ENCODE measurements at regions of chr17 and their contacts with region 1.

Region 1: GRCh38 chr17:55356434-55357328 is 65.0 kb downstream of the MMD start:
- DNase-seq: no peak

Region 2: DNA sequence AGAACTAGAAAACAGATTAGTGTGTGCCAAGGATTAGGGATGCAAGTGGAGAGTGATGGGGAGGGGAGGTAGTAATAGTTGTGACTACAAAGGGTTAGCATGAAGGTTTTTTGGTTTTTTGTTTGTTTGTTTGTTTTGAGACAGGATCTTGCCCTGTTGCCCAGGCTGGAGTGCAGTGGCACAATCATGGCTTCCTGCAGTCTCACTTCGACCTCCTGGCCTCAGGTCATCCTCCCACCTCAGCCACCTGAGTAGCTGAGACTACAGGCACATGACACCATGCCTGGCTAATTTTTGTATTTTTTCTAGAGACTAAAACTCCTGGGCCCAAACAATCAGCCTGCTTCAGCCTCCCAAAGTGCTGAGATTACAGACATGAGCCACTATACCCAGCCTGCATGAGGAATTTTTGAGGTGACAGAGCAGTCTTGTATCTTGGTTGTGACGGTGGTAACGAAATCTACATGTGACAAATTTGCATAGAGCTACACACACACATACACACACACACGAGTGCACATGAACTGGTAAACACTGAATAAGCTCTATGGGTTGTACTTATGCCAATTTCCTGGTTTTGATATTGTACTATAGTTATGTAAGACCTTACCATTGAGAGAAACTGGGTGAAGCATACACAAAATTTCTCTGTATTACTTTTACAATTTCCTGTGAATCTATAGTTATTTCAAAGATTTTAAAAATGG is 515.6 kb before region 1 on chr17:
- intact Hi-C with region 1: no loop called
- DNase-seq: no peak

Region 3: GRCh38 chr17:55053855-55054254 is 302.8 kb before region 1 on chr17:
- intact Hi-C with region 1: loop called (anchors 10 kb)
- DNase-seq: no peak

Region 4: DNA sequence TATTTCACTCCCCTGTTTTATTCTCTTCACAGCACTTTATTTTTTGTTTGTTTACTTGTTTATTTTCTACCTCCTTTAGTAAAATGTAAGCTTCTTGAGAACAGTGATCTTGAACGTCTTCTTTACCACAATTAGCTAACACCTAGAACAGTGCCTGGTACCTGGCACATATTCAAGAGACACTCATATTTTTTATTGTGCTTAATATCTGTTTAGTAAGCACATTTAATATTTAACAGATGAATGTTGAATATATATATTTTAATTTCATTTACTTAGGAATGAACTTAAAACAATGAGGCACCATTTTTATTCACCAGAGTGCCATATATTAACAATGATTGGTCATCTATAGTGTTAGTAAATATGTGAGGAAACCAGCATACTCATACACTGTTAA is 257.9 kb before region 1 on chr17:
- intact Hi-C with region 1: no loop called
- DNase-seq: no peak

Region 5: GRCh38 chr17:55168958-55169687 is 187.6 kb before region 1 on chr17:
- intact Hi-C with region 1: no loop called
- DNase-seq: no peak